ENCODE measurements at regions of chr20 and their contacts with region 1.

Region 1: DNA sequence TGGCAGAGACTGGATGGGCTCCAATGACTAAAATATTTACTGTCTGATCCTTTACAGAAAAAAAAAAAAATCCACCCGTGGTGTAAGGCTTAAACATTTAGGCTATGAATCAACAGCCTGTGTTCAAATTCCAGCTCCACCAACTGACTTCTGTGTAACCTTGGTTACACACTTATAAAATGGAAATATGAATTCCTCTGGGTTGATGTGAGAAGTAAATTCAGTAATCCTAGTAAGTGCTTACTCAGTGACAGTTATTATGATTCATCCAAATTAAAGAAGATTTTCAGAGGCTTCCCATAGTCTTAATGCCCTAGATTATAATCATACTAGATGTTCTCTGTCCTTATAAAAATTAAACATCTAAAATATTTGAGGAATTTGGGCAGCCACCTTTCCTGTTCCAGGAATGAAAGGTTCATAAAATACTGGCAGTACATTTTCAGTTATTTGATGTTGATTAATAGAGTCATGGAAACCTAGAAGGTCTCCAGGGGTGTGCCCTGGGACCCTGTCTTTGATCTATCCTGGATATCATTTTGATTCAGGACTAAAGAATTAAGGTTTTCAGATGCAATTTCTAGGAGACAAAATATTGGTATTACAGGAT is 180.3 kb upstream of the ZNF217 start:
- DNase-seq: peak; percentile 100
- ATAC-seq: peak; percentile 75
- H3K4me3 ChIP-seq: peak overlapping the region; percentile 54
- H3K27ac ChIP-seq: peak overlapping the region; percentile 92
- H3K4me1 ChIP-seq: peaks cover 48% of the 10 kb centered on the region
- H3K27me3 ChIP-seq: no peaks in the 10 kb centered on the region
- CTCF ChIP-seq: no peak

Region 2: GRCh38 chr20:53578492-53579222 is 195.2 kb before region 1 on chr20:
- CTCF ChIA-PET with region 1: no interaction called
- POLR2A ChIA-PET with region 1: interaction called, 5 read pairs
- intact Hi-C with region 1: loop called (anchors 1 kb)
- DNase-seq: peak; percentile 100
- ATAC-seq: peak; percentile 12
- H3K4me3 ChIP-seq: peak overlapping the region; percentile 75
- H3K27ac ChIP-seq: peak overlapping the region; percentile 88
- H3K4me1 ChIP-seq: peaks cover 59% of the 10 kb centered on the region
- H3K27me3 ChIP-seq: no peaks in the 10 kb centered on the region
- CTCF ChIP-seq: peak; percentile 99

Region 3: GRCh38 chr20:53692413-53693067 is 81.4 kb before region 1 on chr20:
- CTCF ChIA-PET with region 1: no interaction called
- POLR2A ChIA-PET with region 1: interaction called, 13 read pairs
- intact Hi-C with region 1: no loop called
- DNase-seq: peak; percentile 74
- ATAC-seq: peak; percentile 16; the same call in 1 of the 2 replicates
- H3K4me3 ChIP-seq: no peak overlapping the region
- H3K27ac ChIP-seq: no peak overlapping the region
- H3K4me1 ChIP-seq: peaks cover 36% of the 10 kb centered on the region
- H3K27me3 ChIP-seq: no peaks in the 10 kb centered on the region
- CTCF ChIP-seq: no peak

Region 4: GRCh38 chr20:53748821-53749421 is 25.0 kb before region 1 on chr20:
- CTCF ChIA-PET with region 1: no interaction called
- POLR2A ChIA-PET with region 1: interaction called, 5 read pairs
- intact Hi-C with region 1: loop called (anchors 1 kb)
- DNase-seq: peak; percentile 58
- ATAC-seq: no peak
- H3K4me3 ChIP-seq: no peak overlapping the region
- H3K27ac ChIP-seq: peak overlapping the region; percentile 47
- H3K4me1 ChIP-seq: peaks cover 56% of the 10 kb centered on the region
- H3K27me3 ChIP-seq: no peaks in the 10 kb centered on the region
- CTCF ChIP-seq: no peak

Region 5: DNA sequence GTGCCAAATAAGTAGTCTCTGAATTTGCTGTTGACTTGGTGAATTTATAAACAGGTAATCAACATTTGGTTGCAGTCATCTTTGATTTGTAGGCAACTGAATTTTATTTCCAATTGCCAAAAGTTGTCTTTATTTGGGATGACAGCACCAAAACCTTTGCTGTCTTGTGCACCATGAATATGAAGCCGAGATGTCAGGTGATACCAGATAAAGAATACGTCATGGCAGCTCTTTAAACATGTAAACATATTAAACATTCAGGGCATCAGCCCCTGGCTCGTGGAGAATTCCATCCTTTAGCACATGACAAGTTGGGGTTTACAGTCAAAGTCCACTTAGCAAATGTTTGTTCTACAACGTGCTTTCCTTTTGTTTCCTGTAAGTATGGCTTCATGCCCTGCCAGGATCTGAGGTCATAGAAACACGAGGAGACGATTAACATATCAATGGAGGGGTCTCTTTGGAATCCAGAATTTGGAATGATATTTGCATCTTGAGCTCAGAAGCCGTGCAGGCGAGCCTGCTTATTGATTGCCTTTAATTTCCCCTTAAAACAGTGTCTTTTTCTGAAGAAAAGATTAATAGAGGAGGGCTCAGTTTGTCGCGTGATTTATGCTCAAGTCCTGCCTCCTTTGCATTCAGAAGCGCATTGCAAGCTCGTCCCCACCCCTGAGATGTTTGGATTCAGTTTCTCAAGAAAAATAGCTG is 10.0 kb before region 1 on chr20:
- CTCF ChIA-PET with region 1: interaction called, 4 read pairs
- POLR2A ChIA-PET with region 1: no interaction called
- intact Hi-C with region 1: loop called (anchors 1 kb)
- DNase-seq: peak; percentile 55
- ATAC-seq: peak; percentile 76
- H3K4me3 ChIP-seq: no peak overlapping the region
- H3K27ac ChIP-seq: peak overlapping the region; percentile 15
- H3K4me1 ChIP-seq: peaks cover 17% of the 10 kb centered on the region
- H3K27me3 ChIP-seq: no peaks in the 10 kb centered on the region
- CTCF ChIP-seq: no peak

Region 6: GRCh38 chr20:53786445-53787267 is 12.8 kb after region 1 on chr20:
- CTCF ChIA-PET with region 1: interaction called, 6 read pairs
- POLR2A ChIA-PET with region 1: interaction called, 23 read pairs
- intact Hi-C with region 1: loop called (anchors 1 kb)
- DNase-seq: peak; percentile 71
- ATAC-seq: peak; percentile 46
- H3K4me3 ChIP-seq: peak overlapping the region; percentile 27
- H3K27ac ChIP-seq: peak overlapping the region; percentile 87
- H3K4me1 ChIP-seq: peaks cover 58% of the 10 kb centered on the region
- H3K27me3 ChIP-seq: no peaks in the 10 kb centered on the region
- CTCF ChIP-seq: peak; percentile 39

Region 7: DNA sequence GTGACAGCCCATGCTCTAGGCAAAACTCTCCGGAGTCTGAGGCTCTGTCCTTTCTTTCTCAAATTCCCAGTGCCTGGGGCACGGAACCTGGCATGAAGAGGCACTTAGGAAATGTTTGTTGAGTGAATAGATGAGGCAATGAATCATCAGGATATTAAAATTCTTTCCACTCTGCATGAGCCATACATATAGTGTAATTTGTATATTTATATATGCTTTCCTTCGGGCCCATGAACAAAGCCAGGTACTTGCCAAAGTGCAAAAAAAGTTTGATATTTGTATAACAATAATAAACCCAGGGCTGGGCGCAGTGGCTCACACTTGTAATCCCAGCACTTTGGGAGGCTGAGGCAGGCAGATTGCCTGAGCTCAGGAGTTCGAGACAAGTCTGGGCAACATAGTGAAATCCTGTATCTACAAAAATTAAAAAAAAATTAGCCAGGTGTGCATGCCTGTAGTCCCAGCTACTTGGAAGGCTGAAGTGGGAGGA is 32.0 kb after region 1 on chr20:
- CTCF ChIA-PET with region 1: no interaction called
- POLR2A ChIA-PET with region 1: interaction called, 8 read pairs
- intact Hi-C with region 1: loop called (anchors 1 kb)
- DNase-seq: peak; percentile 100
- ATAC-seq: peak; percentile 82
- H3K4me3 ChIP-seq: no peak overlapping the region
- H3K27ac ChIP-seq: peak overlapping the region; percentile 89
- H3K4me1 ChIP-seq: peaks cover 50% of the 10 kb centered on the region
- H3K27me3 ChIP-seq: no peaks in the 10 kb centered on the region
- CTCF ChIP-seq: no peak

Region 8: GRCh38 chr20:53819973-53820451 is 46.1 kb after region 1 on chr20:
- CTCF ChIA-PET with region 1: no interaction called
- POLR2A ChIA-PET with region 1: no interaction called
- intact Hi-C with region 1: no loop called
- DNase-seq: no peak
- ATAC-seq: no peak
- H3K4me3 ChIP-seq: no peak overlapping the region
- H3K27ac ChIP-seq: no peak overlapping the region
- H3K4me1 ChIP-seq: no peaks in the 10 kb centered on the region
- H3K27me3 ChIP-seq: no peaks in the 10 kb centered on the region
- CTCF ChIP-seq: no peak

Region 9: DNA sequence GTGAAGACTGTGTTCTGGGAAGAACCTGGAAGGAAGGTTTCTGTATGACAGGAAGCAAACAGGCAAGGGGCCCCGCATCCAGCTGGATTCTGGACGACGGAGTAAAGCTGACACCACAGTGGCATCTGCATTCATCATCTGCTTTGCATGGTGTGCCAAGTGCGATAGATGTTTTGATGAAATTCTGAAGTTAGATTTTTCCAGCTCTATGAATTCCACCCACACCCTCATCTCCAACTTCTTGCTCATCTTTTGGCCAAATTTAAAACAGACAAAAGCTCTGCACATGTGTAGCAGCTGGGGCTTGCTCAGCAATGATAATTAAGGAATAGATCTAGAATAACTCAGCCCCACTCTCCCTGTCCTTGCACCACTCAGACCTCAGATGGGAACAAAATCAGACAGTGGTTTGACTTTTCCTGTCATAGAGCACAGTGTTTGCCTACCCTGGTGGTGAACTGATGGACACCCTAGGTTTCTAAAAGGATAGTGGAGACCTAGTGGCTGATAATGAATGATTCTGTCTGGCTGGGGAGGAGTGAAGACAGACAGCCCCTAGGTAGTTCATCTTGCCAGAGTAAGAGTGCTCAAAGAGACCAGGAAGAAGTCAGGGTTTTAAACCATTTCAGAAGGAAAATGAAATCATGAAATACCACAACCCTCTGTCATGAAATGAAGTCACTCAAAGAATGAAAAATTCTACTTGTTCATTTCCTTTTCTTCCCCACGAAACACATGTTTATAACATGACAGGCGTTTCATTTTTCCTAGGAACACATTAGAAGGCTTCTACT is 210.7 kb after region 1 on chr20:
- CTCF ChIA-PET with region 1: no interaction called
- POLR2A ChIA-PET with region 1: no interaction called
- intact Hi-C with region 1: no loop called
- DNase-seq: no peak
- ATAC-seq: no peak
- H3K4me3 ChIP-seq: no peak overlapping the region
- H3K27ac ChIP-seq: no peak overlapping the region
- H3K4me1 ChIP-seq: no peaks in the 10 kb centered on the region
- H3K27me3 ChIP-seq: peaks cover 94% of the 10 kb centered on the region
- CTCF ChIP-seq: no peak

Region 10: GRCh38 chr20:54214566-54214965 is 440.7 kb after region 1 on chr20:
- CTCF ChIA-PET with region 1: no interaction called
- POLR2A ChIA-PET with region 1: no interaction called
- intact Hi-C with region 1: no loop called
- DNase-seq: no peak
- ATAC-seq: no peak
- H3K4me3 ChIP-seq: no peak overlapping the region
- H3K27ac ChIP-seq: no peak overlapping the region
- H3K4me1 ChIP-seq: peaks cover 6% of the 10 kb centered on the region
- H3K27me3 ChIP-seq: no peaks in the 10 kb centered on the region
- CTCF ChIP-seq: no peak